ENCODE measurements at regions of chr11 and their contacts with region 1.

Region 1: DNA sequence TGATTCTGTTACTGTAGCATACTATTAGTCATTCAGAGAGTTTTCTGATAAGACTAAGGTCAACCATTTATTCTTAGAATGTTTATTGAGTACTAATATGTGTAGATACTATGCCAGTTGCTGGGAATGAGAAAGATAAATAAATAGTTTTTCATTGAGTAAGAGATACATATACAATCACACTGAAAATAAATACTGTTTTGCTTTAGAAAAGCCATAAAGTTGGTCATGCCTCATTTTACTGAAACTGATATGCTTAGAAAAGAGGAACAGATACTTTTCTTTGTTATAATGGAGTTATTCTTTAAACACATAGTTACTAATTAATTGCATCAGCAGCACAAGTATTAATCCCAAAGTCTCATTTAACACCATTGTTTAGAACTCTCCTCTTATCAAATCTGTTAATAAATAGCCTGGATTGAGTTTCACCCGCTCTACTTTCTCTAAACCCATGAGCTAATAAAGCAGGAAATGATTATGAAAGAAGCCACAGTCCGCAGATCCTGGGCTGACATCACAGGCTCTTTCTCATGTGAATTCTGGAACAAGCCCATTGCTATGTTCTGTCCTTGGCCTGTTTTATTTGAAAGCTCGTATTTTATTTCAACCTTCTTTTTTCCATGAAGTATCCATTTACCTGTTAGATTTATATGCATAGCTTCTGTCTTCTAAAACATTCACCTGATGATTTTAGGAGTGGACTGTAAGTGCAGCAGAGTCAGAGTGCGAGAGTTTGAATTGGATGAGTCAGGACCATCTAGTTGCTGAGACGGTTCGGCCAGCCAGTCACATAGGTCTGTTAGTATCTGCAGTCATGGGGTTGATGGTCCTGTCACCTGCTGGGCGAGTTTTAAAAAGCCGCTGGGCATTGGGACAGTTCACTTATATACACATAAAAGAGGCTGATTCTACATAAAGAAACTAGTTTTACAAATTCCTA is 35.5 kb downstream of the PIWIL4 start:
- DNase-seq: peak; percentile 40
- H3K4me3 ChIP-seq: no peak overlapping the region
- H3K27ac ChIP-seq: no peak overlapping the region
- H3K4me1 ChIP-seq: peaks cover 8% of the 10 kb centered on the region
- H3K27me3 ChIP-seq: no peaks in the 10 kb centered on the region
- CTCF ChIP-seq: peak; percentile 57

Region 2: DNA sequence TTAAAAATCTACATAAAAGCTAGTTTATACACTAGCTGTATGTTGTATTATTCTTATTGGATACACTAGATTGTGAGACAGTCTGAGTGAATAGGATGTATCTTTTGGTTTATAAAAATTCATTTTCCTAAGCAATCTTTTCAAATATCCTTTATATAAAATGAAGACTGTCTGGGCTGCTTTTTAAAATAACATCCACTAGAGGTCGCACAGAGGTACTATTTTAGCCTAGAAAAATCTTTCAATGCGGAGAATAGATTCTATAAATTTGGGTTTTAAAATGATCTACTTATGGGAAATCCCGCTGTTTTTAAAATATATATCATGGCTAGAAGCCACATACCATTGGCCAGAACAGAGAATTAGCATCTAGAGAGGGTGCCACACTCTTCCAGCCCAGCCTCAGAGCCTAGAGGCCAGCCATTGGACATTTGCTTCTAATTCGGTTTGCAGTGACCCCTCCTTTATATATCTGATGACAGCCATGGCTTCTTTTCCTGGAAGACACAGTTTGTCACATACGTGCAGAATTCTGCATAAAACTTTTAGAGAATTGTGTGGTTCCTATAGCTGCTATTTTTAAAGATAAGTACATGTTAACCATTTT is 83.1 kb before region 1 on chr11:
- intact Hi-C with region 1: loop called (anchors 5 kb)
- DNase-seq: no peak
- H3K4me3 ChIP-seq: no peak overlapping the region
- H3K27ac ChIP-seq: no peak overlapping the region
- H3K4me1 ChIP-seq: peaks cover 3% of the 10 kb centered on the region
- H3K27me3 ChIP-seq: peaks cover 12% of the 10 kb centered on the region
- CTCF ChIP-seq: peak; percentile 73

Region 3: GRCh38 chr11:95156916-95157541 is 554.3 kb after region 1 on chr11:
- intact Hi-C with region 1: no loop called
- DNase-seq: peak; percentile 44
- H3K4me3 ChIP-seq: no peak overlapping the region
- H3K27ac ChIP-seq: peak overlapping the region; percentile 65
- H3K4me1 ChIP-seq: peaks cover 22% of the 10 kb centered on the region
- H3K27me3 ChIP-seq: no peaks in the 10 kb centered on the region
- CTCF ChIP-seq: no peak

Measured in left ventricle myocardium inferior (tissue), 1 donor.